Right ventricle myocardium inferior (tissue), 1 donor: ENCODE measurements at regions of chr16 and their contacts with region 1.

Region 1: DNA sequence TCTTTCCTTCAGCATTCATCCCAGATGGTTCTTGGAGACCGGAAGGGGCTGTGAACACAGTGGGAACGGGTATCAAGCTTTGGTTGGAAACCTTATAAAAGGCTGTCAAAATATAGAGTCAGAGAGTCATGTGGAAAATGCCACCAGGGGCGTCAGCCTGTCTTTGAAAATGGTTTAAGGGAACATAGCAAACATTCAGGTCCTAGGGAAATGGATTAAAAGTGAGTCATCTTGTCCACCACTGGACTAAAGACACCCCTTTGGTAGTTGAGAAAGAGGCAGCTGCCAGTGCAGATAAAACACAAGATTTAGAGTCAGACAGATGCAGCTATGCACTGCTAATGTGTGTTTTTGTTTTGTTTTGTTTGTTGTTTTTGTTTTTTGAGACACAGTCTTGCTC is 47.8 kb upstream of the BCO1 start:
- DNase-seq: no peak
- ATAC-seq: no peak

Region 2: GRCh38 chr16:81155757-81156156 is 34.9 kb before region 1 on chr16:
- intact Hi-C with region 1: loop called (anchors 2 kb)
- DNase-seq: no peak
- ATAC-seq: no peak